ENCODE measurements at regions of chr15 and their contacts with region 1.

Region 1: GRCh38 chr15:49383266-49383665 is 39.8 kb upstream of the FGF7 start:
- DNase-seq: no peak
- H3K4me3 ChIP-seq: no peak overlapping the region
- CTCF ChIP-seq: no peak
- POLR2A ChIP-seq: no peak

Region 2: GRCh38 chr15:48440084-48440483 is 943.2 kb before region 1 on chr15:
- intact Hi-C with region 1: no loop called
- DNase-seq: peak in 1 of 2 donors; percentile 38
- H3K4me3 ChIP-seq: no peak overlapping the region
- CTCF ChIP-seq: no peak
- POLR2A ChIP-seq: no peak

Region 3: DNA sequence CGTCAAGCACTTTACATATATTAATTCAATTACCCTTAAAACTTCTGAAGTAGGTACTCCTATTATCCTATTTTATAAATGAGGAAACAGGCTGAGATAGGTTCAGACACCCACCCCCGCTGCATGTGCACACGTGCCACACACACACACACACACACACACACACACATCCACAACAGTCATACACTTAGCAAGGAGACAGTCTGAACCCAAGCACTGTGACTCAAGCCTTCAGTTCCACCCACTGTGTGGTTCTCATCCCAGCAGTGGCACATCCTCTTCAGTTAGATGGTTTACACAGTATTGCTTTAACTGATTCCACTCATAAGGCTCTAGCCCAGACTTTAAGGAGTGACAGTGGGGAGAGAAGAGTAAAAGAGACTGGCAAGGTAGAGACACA is 51.3 kb before region 1 on chr15:
- intact Hi-C with region 1: no loop called
- DNase-seq: no peak
- H3K4me3 ChIP-seq: no peak overlapping the region
- CTCF ChIP-seq: no peak
- POLR2A ChIP-seq: no peak

Region 4: DNA sequence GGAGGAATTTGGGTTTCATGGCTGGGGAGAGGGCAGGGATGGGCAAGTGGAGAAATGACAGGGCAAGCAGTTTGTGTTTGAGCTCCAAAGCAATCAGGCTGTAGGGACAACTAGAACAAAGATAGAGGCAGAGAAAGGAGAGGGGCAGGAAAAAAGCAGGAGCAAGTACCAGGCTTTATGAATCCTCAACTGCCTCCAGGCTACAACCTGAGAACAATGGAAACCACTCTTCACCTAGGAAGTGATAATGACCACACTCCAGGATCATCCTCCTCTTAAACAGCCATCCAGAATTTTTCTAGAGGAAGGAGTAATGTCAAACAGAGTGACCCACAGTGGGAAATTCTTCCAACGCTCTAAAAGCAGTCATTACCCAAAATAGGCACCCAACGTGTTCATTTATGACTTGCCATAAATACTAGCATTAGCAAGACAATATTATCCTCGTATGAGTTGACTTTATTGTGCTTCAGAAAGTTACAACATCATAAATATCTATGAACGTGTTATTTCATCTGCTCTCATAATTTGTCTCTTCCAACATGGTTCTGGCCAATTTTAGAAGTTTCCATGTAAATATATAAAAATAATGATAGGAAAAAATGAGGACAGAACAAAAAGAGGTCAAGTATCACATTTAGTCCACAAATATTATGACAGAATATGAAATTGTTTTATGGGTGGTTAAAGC is 1660.9 kb after region 1 on chr15:
- intact Hi-C with region 1: loop called (anchors 5 kb)
- DNase-seq: no peak
- H3K4me3 ChIP-seq: no peak overlapping the region
- CTCF ChIP-seq: no peak
- POLR2A ChIP-seq: no peak